Cardiac septum (tissue), 1 donor: ENCODE measurements at regions of chr12 and their contacts with region 1.

Region 1: DNA sequence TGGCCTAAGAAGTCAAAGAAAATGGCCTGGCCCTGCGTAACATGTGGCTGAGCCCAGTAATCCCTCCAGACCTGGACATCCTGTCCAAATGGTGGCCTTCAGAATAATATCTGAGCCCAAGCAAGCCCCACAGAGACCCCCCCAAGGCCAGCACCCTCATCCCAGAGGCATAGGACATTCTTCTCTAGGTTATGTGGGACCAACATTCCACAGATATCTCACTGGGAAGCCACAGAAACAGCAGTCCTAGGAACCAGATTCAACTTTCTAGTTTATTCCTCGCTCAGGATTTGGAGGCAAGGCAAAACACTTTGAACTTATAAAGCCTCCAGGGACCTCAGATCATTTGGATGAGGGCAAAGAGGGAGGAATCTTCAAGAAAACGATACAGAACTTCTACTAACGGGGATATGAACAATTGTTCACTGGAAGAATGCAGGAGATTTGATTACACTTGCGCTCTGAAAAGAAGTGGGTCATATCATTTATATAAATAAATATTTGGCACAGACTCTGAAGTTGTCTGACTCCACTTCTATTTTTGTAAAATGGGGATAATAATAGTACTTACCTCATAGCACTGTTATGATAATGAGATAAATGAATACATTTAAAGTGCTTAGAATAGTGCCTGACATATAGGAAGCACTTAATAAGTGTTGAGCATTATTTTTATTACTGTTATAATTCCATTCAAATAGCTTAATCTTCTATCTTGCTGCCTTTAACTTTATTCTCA is 171.5 kb downstream of the NUAK1 start:
- DNase-seq: no peak

Region 2: DNA sequence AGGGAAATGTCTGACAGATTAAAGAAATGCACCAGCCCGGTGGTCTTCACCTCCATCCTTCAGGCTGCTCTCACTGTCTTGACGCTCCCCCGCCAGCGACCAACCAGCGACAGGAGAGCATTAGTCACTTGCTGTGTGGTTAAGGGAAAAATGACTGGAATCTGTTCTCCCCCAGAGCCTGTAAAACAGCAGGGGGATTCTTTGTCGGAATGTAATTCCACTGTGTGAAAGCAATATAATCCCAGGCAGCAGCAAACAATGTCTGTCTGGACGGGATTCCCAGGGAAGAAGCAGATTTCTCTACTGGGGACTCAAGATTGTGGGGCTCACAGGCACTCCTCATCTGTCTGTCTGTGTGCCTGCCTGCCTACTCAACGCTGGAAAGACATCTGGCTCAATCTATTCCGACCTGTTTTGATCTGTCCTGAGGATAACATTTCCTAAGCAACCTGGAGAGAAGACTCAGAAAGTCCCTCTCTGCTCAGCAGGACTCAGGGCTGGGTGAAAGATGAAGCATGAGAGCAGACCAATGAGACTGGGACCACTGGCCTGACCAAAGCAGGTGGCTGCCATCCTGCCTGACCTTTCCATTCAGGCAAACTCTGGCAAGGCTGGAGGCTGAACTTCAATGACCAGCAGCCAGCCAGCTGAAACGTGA is 116.9 kb after region 1 on chr12:
- intact Hi-C with region 1: loop called (anchors 5 kb)
- DNase-seq: no peak

Region 3: DNA sequence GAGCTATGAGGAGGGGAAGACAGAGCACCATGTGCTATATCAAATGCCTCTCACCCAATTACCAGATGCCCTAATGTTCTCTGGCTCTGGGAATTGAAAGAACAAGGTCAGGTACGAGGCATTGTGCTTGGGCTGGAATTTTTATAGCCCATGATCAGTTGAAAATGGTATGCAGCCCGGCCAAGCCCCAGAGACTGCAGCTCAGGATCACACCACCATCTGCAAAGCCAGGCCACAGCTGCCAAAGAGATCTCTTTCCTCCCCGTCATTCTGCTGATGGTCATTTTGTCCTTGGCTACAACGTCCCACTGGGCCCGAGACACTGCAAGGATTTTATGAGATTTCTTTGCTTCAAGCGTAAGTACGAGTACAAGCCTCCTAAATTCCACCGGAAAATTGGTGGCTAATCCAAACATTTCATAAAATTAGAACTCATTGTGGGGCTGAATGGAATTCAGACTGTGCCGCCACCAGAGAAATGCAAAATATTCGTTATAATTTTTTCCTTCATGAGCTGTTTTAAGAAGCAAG is 156.4 kb after region 1 on chr12:
- intact Hi-C with region 1: loop called (anchors 5 kb)
- DNase-seq: no peak

Region 4: GRCh38 chr12:106149096-106149784 is 182.0 kb after region 1 on chr12:
- intact Hi-C with region 1: loop called (anchors 5 kb)
- DNase-seq: no peak